AG04450 (cell line): ENCODE measurements at regions of chr9 and their contacts with region 1.

Region 1: GRCh38 chr9:107813287-107813686 is 323.7 kb upstream of the KLF4 start:
- DNase-seq: no peak
- H3K4me3 ChIP-seq: no peak overlapping the region
- H3K27ac ChIP-seq: no peak overlapping the region
- H3K27me3 ChIP-seq: peaks cover 3% of the 10 kb centered on the region
- CTCF ChIP-seq: no peak

Region 2: GRCh38 chr9:107684224-107684623 is 129.1 kb before region 1 on chr9:
- CTCF ChIA-PET with region 1: no interaction called
- POLR2A ChIA-PET with region 1: interaction called, 10 read pairs
- DNase-seq: no peak
- H3K4me3 ChIP-seq: no peak overlapping the region
- H3K27ac ChIP-seq: no peak overlapping the region
- H3K27me3 ChIP-seq: no peaks in the 10 kb centered on the region
- CTCF ChIP-seq: no peak

Region 3: GRCh38 chr9:107768224-107768623 is 45.1 kb before region 1 on chr9:
- CTCF ChIA-PET with region 1: no interaction called
- POLR2A ChIA-PET with region 1: no interaction called
- DNase-seq: no peak
- H3K4me3 ChIP-seq: no peak overlapping the region
- H3K27ac ChIP-seq: no peak overlapping the region
- H3K27me3 ChIP-seq: no peaks in the 10 kb centered on the region
- CTCF ChIP-seq: no peak